HepG2 (cell line): ENCODE measurements at regions of chr7 and their contacts with region 1.

Region 1: GRCh38 chr7:130069978-130070860 is at the start of gene KLHDC10:
- DNase-seq: peak; percentile 97
- ATAC-seq: peak; percentile 97
- H3K4me3 ChIP-seq: peak within 1 kb of the TSS; percentile 86 to 94 (median 91)
- H3K27ac ChIP-seq: peak within 1 kb of the TSS; percentile 79
- H3K4me1 ChIP-seq: peaks cover 57% of the 10 kb centered on the region
- H3K27me3 ChIP-seq: no peaks in the 10 kb centered on the region; a peak in 1 of 5 replicates
- CTCF ChIP-seq: no peak
- EP300 ChIP-seq: peak; percentile 18 to 44; a peak in 3 of 4 replicates
- POLR2A ChIP-seq: peak; percentile 39 to 49; a peak in 3 of 4 replicates
- RAD21 ChIP-seq: no peak
- total RNA-seq, gene KLHDC10: 21.6 and 33.4 TPM in 2 replicates

Region 2: GRCh38 chr7:129859183-129859582 is 211.0 kb before region 1 on chr7:
- CTCF ChIA-PET with region 1: no interaction called
- POLR2A ChIA-PET with region 1: no interaction called
- in situ Hi-C with region 1: no loop called
- intact Hi-C with region 1: no loop called
- DNase-seq: no peak
- ATAC-seq: no peak
- H3K4me3 ChIP-seq: no peak overlapping the region
- H3K27ac ChIP-seq: no peak overlapping the region
- H3K4me1 ChIP-seq: no peaks in the 10 kb centered on the region
- H3K27me3 ChIP-seq: no peaks in the 10 kb centered on the region
- CTCF ChIP-seq: no peak
- EP300 ChIP-seq: no peak
- POLR2A ChIP-seq: no peak
- RAD21 ChIP-seq: no peak

Region 3: DNA sequence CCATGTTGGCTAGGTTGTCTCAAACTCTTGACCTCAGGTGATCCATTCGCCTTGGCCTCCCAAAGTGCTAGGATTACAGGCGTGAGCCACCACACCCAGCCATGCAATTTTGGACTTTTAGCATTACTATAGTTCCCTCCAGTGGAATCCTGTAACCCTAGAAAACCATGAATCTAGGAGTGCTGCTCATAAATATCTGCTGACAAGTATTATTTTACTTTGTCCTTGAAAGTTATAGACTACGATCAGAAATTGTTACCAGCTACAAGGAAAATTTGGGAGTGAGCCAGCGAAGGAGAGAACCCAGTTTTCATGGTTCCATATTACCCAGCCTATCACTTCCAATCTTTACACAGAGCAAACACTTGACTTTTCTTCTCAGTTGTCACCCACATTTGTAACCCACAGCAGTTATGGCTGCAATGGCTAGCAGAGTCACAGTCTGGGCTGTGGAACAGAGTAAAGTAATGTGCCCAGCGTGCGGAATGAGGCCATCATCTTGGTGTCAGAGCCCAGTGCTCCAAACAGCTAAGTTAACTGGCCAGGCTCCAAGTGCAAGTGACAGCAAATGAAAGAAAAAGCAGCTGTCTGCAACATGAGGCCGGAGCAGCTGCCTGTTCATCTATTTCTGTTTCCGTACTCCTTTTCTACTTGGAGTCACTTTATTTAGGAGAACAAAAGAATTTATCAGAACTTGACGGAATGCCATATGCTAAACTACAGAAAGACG is 48.9 kb before region 1 on chr7:
- CTCF ChIA-PET with region 1: no interaction called
- POLR2A ChIA-PET with region 1: no interaction called
- in situ Hi-C with region 1: no loop called
- intact Hi-C with region 1: no loop called
- DNase-seq: no peak
- ATAC-seq: no peak
- H3K4me3 ChIP-seq: no peak overlapping the region
- H3K27ac ChIP-seq: no peak overlapping the region
- H3K4me1 ChIP-seq: no peaks in the 10 kb centered on the region
- H3K27me3 ChIP-seq: no peaks in the 10 kb centered on the region
- CTCF ChIP-seq: no peak
- EP300 ChIP-seq: no peak
- POLR2A ChIP-seq: no peak
- RAD21 ChIP-seq: no peak

Region 4: GRCh38 chr7:130050773-130051125 is 19.5 kb before region 1 on chr7:
- CTCF ChIA-PET with region 1: no interaction called
- POLR2A ChIA-PET with region 1: interaction called, 10 read pairs
- in situ Hi-C with region 1: no loop called
- intact Hi-C with region 1: no loop called
- DNase-seq: no peak
- ATAC-seq: no peak
- H3K4me3 ChIP-seq: peak overlapping the region; percentile 89 to 97 (median 94)
- H3K27ac ChIP-seq: peak overlapping the region; percentile 75
- H3K4me1 ChIP-seq: peaks cover 14% of the 10 kb centered on the region
- H3K27me3 ChIP-seq: no peaks in the 10 kb centered on the region; a peak in 1 of 5 replicates
- CTCF ChIP-seq: no peak
- EP300 ChIP-seq: no peak
- POLR2A ChIP-seq: no peak
- RAD21 ChIP-seq: no peak

Region 5: GRCh38 chr7:130114374-130115135 is 44.3 kb after region 1 on chr7:
- CTCF ChIA-PET with region 1: no interaction called
- POLR2A ChIA-PET with region 1: no interaction called
- in situ Hi-C with region 1: no loop called
- intact Hi-C with region 1: no loop called
- DNase-seq: no peak
- ATAC-seq: no peak
- H3K4me3 ChIP-seq: peak overlapping the region in 1 of 3 experiments; percentile 11; a peak in 1 of 6 replicates
- H3K27ac ChIP-seq: peak overlapping the region; percentile 21
- H3K4me1 ChIP-seq: peaks cover 20% of the 10 kb centered on the region
- H3K27me3 ChIP-seq: no peaks in the 10 kb centered on the region
- CTCF ChIP-seq: no peak
- EP300 ChIP-seq: no peak
- POLR2A ChIP-seq: no peak
- RAD21 ChIP-seq: no peak

Region 6: DNA sequence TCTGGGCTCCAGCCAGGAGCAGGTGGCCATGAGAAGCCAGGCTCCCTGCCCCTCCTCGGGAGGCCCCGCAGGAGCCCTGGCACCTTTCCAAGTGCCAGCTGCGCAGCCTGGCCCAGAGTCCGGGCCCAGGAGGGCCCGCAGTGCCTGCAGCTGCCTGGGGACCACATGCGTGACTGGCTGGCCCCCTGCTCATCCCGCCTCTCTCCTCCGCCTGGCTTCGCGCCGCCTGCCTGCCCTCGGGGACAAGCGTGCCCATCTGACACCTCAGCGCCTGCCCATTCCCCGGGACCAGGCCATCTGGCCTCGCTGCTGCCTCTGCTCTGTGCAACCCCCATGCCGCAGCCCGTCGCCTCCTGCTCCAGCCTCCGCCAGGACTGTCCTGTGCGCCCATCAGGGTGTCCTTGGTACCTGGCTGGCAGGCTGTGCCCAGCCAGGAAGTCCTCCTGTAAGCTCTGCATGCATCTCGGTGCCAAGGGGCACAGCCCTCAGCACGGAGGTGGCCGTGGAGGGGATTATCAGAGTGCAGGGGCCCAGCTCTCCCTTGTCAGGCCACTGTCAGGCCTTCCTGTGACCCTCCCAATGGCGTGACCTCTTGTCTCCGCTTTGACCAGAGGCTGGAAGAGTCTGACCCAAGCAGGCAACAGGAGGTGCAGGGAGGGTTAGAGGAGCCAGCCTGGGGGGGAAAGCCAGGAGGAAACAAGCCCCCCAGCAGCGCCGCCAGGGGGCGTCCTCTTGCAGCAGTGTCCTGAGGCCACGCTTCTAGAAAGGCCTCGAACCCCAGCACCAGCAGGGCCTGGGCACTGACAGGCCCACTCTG is 84.5 kb after region 1 on chr7:
- CTCF ChIA-PET with region 1: no interaction called
- POLR2A ChIA-PET with region 1: no interaction called
- in situ Hi-C with region 1: no loop called
- intact Hi-C with region 1: loop called (anchors 5 kb)
- DNase-seq: no peak
- ATAC-seq: peak; percentile 34
- H3K4me3 ChIP-seq: no peak overlapping the region
- H3K27ac ChIP-seq: no peak overlapping the region
- H3K4me1 ChIP-seq: peaks cover 16% of the 10 kb centered on the region
- H3K27me3 ChIP-seq: no peaks in the 10 kb centered on the region
- CTCF ChIP-seq: peak; percentile 65
- EP300 ChIP-seq: no peak
- POLR2A ChIP-seq: no peak
- RAD21 ChIP-seq: no peak

Region 7: DNA sequence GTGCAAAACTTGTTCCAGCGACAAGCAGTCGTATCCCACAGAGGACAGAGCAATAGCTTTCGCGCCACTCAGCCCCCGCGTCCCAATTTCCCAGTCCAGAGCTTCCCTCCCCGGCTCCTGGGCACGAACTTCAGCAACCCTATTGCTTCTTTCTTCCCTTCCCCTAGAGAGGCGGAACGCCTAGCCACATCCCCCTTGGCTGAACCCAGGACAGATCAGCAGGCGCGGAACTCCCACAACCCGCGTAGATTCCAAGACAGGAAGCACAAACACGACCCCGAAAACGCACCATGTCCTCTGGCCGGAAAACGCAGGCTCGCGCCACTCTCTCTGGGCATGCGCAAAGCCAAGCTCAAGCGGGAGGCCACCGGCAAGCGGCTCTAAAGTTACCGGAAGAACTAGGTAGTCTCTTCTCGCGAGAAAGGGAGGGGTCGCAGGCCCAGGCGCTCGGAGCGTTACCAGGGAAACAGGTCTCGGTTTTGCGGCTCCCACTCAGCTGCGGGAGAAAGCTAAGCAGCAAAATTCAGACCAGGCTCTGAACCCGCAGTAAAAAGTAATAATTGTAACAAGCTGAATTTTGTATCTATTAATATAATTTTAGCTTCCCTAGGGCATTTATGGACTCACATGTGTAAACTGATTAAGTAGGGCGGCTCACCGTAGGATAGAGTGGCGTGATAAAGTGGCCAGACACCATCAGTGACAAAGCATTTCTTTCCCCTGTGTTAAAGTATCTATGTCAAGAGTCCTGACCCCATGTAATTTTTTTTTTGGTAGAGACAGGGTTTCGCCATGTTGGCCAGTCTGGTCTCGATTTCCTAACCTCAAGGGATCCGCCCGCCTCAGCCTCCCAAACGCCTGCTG is 135.1 kb after region 1 on chr7 and contains the start of gene TMEM209:
- CTCF ChIA-PET with region 1: no interaction called
- POLR2A ChIA-PET with region 1: interaction called, 28 read pairs
- in situ Hi-C with region 1: no loop called
- intact Hi-C with region 1: loop called (anchors 10 kb)
- DNase-seq: peak; percentile 96
- ATAC-seq: peak; percentile 96
- H3K4me3 ChIP-seq: peak within 1 kb of the TSS; percentile 83 to 94 (median 92)
- H3K27ac ChIP-seq: peak within 1 kb of the TSS; percentile 97
- H3K4me1 ChIP-seq: peaks cover 25% of the 10 kb centered on the region
- H3K27me3 ChIP-seq: no peaks in the 10 kb centered on the region; a peak in 1 of 5 replicates
- CTCF ChIP-seq: no peak
- EP300 ChIP-seq: peak in 1 of 2 experiments; percentile 15; a peak in 1 of 4 replicates
- POLR2A ChIP-seq: peak; percentile 92 to 95
- RAD21 ChIP-seq: no peak
- total RNA-seq, gene TMEM209: 8.8 and 14.5 TPM in 2 replicates

Region 8: DNA sequence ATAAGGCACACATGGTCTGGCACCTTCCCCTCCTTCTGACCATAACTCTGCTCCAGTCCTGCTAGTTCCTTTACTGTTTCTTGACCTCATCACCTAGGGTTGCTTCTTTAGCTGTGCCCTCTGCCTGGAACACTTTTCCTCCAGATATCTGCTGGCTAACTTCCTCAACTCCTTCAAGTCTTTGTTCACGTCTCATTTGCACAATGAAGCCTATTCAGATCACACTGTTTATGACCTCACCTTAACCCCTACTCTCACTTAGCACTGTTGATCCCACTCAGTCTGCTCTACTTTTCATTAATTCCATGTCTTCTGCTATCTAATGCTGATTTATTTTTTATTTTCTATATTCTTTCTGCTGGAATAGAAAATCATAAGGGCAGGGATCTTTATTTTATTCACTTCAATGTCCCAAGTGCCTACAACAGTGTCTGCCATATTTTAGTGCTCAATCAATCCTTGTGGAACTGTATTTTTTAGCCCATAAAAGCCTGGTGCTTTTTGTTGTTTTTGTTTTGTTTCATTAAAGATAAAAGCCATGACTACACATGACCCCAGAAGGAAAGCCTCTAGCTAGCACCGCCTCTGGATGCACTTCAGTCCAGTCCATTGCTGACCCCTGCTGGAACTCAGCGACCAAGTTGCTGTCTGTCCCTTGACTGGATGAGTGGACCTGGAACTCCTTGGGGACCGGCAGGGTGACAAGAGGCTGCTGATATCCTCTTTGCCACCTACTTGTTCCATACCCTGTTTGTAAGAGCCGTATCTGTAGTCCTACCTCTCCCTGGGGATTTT is 651.5 kb after region 1 on chr7:
- CTCF ChIA-PET with region 1: no interaction called
- POLR2A ChIA-PET with region 1: no interaction called
- in situ Hi-C with region 1: loop called (anchors 10 kb)
- intact Hi-C with region 1: loop called (anchors 1 kb)
- DNase-seq: peak; percentile 49
- ATAC-seq: peak; percentile 98
- H3K4me3 ChIP-seq: no peak overlapping the region
- H3K27ac ChIP-seq: no peak overlapping the region
- H3K4me1 ChIP-seq: no peaks in the 10 kb centered on the region
- H3K27me3 ChIP-seq: 0 out of 5 replicates have a peak, but pooled peaks cover 0 to 5% of the 10 kb centered on the region in 2 experiments
- CTCF ChIP-seq: peak; percentile 90
- EP300 ChIP-seq: no peak
- POLR2A ChIP-seq: no peak
- RAD21 ChIP-seq: peak; percentile 77

Region 9: GRCh38 chr7:130831817-130832481 is 761.7 kb after region 1 on chr7:
- CTCF ChIA-PET with region 1: no interaction called
- POLR2A ChIA-PET with region 1: no interaction called
- in situ Hi-C with region 1: no loop called
- intact Hi-C with region 1: loop called (anchors 5 kb)
- DNase-seq: peak; percentile 32
- ATAC-seq: no peak
- H3K4me3 ChIP-seq: no peak overlapping the region
- H3K27ac ChIP-seq: no peak overlapping the region
- H3K4me1 ChIP-seq: no peaks in the 10 kb centered on the region
- H3K27me3 ChIP-seq: no peaks in the 10 kb centered on the region
- CTCF ChIP-seq: peak; percentile 62
- EP300 ChIP-seq: no peak
- POLR2A ChIP-seq: no peak
- RAD21 ChIP-seq: peak; percentile 25; the same call in 1 of the 2 replicates